Dendritic cell treated with granulocyte-macrophage colony-stimulating factor and Interleukin-4, amounts not matched to agents 40 ng/mL and 50 ng/mL, for 4 days (primary cell): ENCODE measurements at regions of chr13 and their contacts with region 1.

Region 1: GRCh38 chr13:114065141-114065925 is 67.1 kb downstream of the RASA3 start:
- H3K4me3 Mint-ChIP-seq: peak overlapping the region; percentile 68
- H3K27ac Mint-ChIP-seq: peak overlapping the region; percentile 93
- H3K4me1 Mint-ChIP-seq: peaks cover 74% of the 10 kb centered on the region
- H3K27me3 Mint-ChIP-seq: no peaks in the 10 kb centered on the region

Region 2: DNA sequence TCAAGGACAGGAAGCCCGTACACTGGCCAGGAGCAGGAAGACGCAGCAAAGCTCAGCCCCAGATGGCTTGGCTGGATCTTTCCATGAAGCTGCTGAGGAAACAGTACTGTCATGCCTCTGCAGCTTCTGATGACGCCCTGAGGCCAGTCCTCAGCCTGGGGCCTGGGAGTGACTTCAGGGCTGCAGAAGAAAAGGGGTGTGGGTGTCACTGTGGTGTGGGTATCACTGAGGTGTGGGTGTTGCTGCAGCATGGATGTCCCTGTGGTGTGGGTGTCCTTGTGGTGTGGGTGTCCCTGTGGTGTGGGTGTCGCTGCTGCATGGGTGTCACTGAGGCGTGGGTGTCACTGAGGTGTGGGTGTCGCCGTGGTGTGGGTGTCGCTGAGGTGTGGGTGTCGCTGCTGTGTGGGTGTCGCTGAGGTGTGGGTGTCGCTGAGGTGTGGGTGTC is 189.5 kb before region 1 on chr13:
- intact Hi-C with region 1: no loop called
- H3K4me3 Mint-ChIP-seq: no peak overlapping the region
- H3K27ac Mint-ChIP-seq: peak overlapping the region; percentile 50
- H3K4me1 Mint-ChIP-seq: peaks cover 13% of the 10 kb centered on the region
- H3K27me3 Mint-ChIP-seq: peaks cover 69% of the 10 kb centered on the region

Region 3: DNA sequence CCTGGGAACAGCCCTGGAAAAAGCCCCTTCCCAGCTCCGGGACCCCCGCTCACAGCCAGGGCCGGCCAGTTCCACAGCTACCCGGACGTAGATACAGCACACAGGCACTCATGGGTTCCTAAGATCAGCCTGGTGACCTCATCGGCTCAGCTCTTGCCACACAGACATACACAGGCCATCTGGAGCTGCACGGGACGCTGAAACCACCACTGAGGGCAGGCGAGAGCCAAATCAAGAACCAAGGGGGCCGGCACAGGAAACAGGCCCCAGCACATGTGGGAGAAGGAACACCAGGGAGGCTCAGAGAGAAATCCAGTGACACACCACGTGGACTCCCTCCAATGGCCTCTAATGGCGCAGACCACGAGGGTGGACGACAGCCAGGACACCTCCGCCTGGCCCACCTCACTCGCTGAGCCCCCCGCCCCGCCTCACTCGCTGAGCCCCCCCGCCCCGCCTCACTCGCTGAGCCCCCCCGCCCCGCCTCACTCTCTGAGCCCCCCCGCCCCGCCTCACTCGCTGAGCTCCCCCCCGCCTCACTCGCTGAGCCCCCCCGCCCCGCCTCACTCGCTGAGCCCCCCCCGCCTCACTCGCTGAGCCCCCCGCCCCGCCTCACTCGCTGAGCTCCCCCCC is 21.8 kb before region 1 on chr13:
- intact Hi-C with region 1: no loop called
- H3K4me3 Mint-ChIP-seq: no peak overlapping the region
- H3K27ac Mint-ChIP-seq: peak overlapping the region; percentile 8
- H3K4me1 Mint-ChIP-seq: peaks cover 40% of the 10 kb centered on the region
- H3K27me3 Mint-ChIP-seq: peaks cover 5% of the 10 kb centered on the region

Region 4: GRCh38 chr13:114115191-114115671 is 49.9 kb after region 1 on chr13:
- intact Hi-C with region 1: loop called (anchors 5 kb)
- H3K4me3 Mint-ChIP-seq: no peak overlapping the region
- H3K27ac Mint-ChIP-seq: peak overlapping the region; percentile 89
- H3K4me1 Mint-ChIP-seq: peaks cover 67% of the 10 kb centered on the region
- H3K27me3 Mint-ChIP-seq: no peaks in the 10 kb centered on the region

Region 5: GRCh38 chr13:114132419-114133121 is 67.2 kb after region 1 on chr13 and contains the start of gene RASA3:
- intact Hi-C with region 1: loop called (anchors 5 kb)
- H3K4me3 Mint-ChIP-seq: peak within 1 kb of the TSS; percentile 90
- H3K27ac Mint-ChIP-seq: peak within 1 kb of the TSS; percentile 84
- H3K4me1 Mint-ChIP-seq: peaks cover 52% of the 10 kb centered on the region
- H3K27me3 Mint-ChIP-seq: peaks cover 13% of the 10 kb centered on the region